Activated CD4-positive, alpha-beta T cell treated with anti-CD3 and anti-CD28 coated beads, Interleukin-2, amount 10 ng/mL, durations not matched to agents 7 days and 5 days (primary cell): ENCODE measurements at regions of chr5 and their contacts with region 1.

Region 1: GRCh38 chr5:43105369-43106289 is 15.1 kb upstream of the ZNF131 start:
- DNase-seq: peak; percentile 92
- H3K4me3 Mint-ChIP-seq: peak overlapping the region; percentile 67
- H3K27ac Mint-ChIP-seq: peak overlapping the region; percentile 86
- H3K4me1 Mint-ChIP-seq: peaks cover 47% of the 10 kb centered on the region
- H3K27me3 Mint-ChIP-seq: no peaks in the 10 kb centered on the region

Region 2: DNA sequence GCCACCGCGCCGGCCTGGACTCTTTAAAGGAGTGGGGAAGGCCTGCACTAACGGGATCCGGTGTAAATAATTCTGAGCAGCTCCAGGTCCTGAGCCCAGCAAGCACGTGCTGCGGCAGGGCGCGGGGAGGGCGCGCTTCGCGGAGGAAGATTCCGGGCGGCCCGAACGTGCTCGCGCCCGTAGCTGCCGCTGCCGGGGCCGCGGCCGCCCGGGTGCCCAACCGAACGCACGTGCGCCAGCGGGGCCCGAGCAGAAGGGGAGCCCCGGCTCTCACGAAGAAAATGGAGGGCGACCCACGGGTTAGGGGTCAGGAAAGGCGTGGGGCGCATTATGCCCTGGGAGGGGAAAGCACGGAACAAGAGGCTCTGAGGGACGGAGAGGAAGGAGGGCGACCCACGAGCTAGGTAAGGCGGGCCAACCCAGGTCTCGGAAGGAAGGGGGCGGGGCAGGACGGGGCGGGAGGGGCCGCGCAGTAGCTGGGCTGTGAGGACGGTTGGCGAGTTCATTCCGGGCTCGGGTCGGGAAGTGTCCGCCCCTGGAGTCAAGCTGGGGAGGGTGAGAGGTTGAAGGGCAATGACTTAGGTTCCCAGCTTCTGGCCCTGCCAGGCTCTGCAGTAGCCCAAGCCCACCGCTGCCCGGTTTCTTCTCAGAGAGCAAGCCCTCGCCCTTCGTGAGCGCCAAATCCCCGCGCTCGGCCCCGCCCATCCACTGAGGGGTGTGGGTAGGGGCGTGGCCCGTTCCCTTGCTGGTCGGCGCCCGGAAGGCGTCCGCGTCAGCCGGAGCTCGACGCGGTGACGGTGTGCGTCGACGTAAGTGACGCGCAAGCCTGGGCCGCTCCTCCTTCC is 15.3 kb after region 1 on chr5 and contains the start of gene ZNF131:
- CTCF ChIA-PET with region 1: interaction called, 166 read pairs
- POLR2A ChIA-PET with region 1: interaction called, 5 read pairs
- DNase-seq: peak; percentile 96
- H3K4me3 Mint-ChIP-seq: peak within 1 kb of the TSS; percentile 91
- H3K27ac Mint-ChIP-seq: peak within 1 kb of the TSS; percentile 95
- H3K4me1 Mint-ChIP-seq: peaks cover 45% of the 10 kb centered on the region
- H3K27me3 Mint-ChIP-seq: no peaks in the 10 kb centered on the region
- total RNA-seq, gene ZNF131: 48.4 to 50.8 TPM